ENCODE measurements at regions of chr9 and their contacts with region 1.

Region 1: DNA sequence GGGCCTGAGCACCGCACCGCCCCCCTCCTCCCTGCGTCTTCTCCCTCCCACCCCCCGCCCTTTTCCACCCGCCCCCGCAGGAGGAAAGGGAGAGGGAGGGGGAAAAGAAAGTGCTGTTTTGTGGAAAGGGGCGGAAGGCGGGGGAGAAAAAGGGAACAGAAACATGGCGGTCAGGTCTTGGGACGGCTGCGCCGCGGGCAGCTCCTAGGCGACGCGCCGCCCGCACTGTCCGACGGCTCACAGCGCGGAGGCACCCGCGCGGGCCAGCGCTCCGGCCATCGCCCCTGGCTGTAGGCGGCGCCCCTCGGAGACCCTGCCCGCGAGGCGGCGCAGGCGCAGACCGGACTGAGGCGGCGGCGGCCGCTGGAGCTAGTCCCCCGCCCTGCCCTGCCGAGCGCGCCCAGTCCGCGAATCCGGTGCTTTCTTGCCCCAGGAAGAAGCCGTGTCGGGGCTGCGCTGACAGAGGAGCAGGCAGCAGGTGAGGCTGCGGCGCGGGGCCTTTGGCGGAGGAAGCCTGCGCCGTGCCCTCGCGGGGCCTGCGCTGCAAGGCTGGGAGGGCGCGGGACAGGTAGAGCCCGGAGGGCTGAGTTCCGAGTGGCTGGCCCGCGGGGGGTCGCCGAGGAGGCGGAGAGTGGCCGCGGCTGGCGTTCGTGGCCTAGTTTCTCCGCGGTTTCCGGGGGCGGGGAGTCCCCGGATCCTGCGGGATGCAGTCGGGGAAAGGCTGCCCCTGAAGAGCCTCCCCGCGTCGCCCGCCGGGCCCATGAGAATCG is at the start of gene DENND4C:
- DNase-seq: peak; percentile 86 to 90
- ATAC-seq: peak; percentile 82
- total RNA-seq, gene DENND4C: 59.6 to 67.0 TPM

Region 2: DNA sequence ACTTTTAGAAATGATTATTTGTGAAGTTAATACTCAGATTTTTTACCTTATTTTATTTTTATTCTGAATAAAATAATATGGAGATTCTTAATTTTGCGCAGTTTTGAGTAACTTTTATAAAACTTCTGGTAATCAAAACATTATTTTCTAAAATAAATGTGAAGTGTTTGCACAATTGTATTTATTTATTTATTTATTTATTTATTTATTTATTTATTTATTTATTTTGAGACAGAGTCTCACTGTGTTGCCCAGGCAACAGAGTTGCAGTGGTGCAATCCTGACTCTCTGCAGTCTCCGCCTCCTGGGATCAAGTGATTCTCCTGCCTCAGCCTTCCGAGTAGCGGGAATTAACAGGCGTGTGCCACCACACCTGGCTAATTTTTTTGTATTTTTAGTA is 76.0 kb after region 1 on chr9:
- intact Hi-C with region 1: loop called in 1 of 2 experiments (anchors 10 kb)
- DNase-seq: no peak
- ATAC-seq: no peak

Region 3: DNA sequence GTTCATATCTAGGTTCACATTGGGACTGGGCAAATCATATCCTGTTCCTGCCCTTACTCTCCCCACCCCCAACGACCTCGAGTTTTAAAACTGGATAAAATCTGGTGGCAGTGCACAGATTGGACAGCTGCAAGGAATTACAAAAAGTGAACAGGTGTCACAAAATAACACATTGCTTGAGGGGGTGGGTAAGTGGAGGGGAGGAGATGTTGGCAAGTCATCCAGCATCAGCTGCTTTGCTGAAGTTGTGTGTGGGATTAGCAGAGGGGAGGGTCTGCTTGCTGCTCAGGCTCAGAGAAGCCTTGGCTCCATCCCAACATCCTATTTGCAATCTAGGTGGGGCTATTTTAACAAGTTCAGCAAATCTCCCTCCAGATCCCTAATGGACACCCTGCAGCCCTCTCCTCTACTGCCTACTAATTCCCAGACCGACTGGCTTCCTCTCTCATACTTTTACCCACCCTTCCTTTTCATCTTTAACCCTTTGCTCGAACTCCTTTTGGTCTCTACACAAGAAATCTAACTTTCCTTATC is 598.1 kb after region 1 on chr9:
- intact Hi-C with region 1: no loop called
- DNase-seq: no peak
- ATAC-seq: no peak

Measured in left colon (tissue), 2 donors.